CD4-positive, alpha-beta memory T cell (primary cell): ENCODE measurements at regions of chr12 and their contacts with region 1.

Region 1: DNA sequence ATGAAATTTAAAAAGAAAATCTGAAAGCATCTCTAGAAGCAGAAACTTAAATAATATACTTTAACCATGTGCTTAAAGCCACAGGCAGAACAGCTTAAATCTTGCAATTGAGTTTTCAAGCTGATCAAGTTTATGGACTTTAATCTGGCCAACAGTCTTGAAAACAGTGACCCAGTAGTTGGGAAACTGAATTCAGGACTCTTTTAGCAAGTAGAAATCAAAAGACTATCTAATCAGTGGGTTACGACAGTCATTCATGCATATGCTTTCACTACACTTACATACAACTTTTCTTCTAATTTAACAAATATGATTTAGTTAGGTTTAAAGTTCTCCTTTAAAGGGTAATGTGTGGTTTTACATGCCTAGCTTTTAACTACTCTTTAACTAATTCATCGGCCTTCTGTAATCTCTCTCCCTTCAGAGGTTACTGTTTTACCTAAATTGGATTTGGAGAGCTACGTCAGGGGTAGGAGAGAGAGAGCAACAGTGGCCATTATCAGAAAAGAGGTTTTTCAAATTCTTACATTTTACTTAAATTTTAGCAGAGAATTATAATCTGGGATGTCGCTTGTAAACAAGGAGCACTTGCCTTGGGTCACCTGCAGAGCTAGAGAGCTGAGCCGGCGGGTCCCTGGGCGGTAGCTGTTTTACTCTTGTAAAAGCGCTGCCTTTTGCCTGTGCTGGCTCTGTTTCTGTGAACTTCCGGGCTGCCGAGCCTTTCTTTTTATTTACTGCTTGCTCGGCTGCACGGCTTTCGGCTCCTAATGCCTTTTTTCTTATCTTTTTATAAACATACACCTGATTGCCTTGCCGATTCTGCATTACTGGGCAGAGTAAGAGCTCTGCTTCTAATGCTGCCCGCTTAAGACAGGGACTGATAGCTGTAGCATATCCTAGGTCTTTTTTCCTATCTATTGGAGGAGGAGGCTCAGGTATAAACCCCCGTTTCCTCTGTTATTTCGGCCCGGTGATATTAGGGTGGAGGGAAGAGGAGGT is 17.4 kb upstream of the LYZ start:
- DNase-seq: peak; percentile 72 to 79 (median 74)
- H3K4me3 ChIP-seq: peak overlapping the region; percentile 49 to 95
- H3K4me3 Mint-ChIP-seq: peak overlapping the region; percentile 94 to 99 (median 96)
- H3K27ac ChIP-seq: peak overlapping the region; percentile 72
- H3K27ac Mint-ChIP-seq: peak overlapping the region; percentile 81 to 99 (median 96)
- H3K4me1 ChIP-seq: peaks cover 60% of the 10 kb centered on the region
- H3K4me1 Mint-ChIP-seq: peaks cover 36 to 64% (median 52%) of the 10 kb centered on the region in 4 donors
- H3K27me3 ChIP-seq: no peaks in the 10 kb centered on the region
- H3K27me3 Mint-ChIP-seq: no peaks in the 10 kb centered on the region

Region 2: DNA sequence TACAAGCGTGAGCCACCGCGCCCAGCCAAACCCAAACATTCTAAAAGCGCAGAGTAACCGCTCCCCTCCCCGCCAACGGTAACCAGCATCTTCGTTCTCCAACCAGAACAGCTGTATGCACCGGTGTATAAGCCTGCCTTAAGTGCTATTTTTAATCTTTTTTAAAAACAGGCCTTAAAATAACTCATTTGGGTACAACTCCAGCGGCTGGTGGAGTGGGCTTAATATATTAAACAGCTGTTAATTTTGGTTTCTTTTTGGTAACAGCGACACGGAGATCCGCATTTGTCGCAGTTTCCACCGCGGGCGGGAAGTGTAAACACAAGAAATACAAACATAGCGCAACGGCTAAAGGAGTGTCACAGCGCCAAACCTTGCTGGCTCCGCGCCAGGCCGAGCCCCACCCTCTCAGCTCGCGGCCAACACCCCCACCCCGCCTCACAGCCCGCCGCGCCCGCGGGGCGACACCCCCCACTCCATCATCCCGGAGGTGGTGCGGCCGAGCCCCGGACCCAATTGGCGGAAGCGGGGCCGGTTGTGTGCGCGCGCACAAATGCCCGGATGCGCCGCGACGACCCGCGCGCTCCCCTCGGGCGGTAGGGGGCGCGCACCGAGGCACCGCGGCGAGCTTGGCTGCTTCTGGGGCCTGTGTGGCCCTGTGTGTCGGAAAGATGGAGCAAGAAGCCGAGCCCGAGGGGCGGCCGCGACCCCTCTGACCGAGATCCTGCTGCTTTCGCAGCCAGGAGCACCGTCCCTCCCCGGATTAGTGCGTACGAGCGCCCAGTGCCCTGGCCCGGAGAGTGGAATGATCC is 523.0 kb before region 1 on chr12 and contains the start of gene MDM2:
- CTCF ChIA-PET with region 1: no interaction called
- POLR2A ChIA-PET with region 1: interaction called, 11 read pairs
- intact Hi-C with region 1: no loop called
- DNase-seq: peak; percentile 97 to 99 (median 99)
- H3K4me3 ChIP-seq: peak within 1 kb of the TSS; percentile 42 to 94
- H3K4me3 Mint-ChIP-seq: peak within 1 kb of the TSS; percentile 95 to 97 (median 96)
- H3K27ac ChIP-seq: peak within 1 kb of the TSS; percentile 92
- H3K27ac Mint-ChIP-seq: peak within 1 kb of the TSS; percentile 98 to 99 (median 99)
- H3K4me1 ChIP-seq: peaks cover 28% of the 10 kb centered on the region
- H3K4me1 Mint-ChIP-seq: peaks cover 9 to 33% (median 22%) of the 10 kb centered on the region in 4 donors
- H3K27me3 ChIP-seq: no peaks in the 10 kb centered on the region
- H3K27me3 Mint-ChIP-seq: no peaks in the 10 kb centered on the region
- total RNA-seq, gene MDM2: 117 to 121 TPM

Region 3: DNA sequence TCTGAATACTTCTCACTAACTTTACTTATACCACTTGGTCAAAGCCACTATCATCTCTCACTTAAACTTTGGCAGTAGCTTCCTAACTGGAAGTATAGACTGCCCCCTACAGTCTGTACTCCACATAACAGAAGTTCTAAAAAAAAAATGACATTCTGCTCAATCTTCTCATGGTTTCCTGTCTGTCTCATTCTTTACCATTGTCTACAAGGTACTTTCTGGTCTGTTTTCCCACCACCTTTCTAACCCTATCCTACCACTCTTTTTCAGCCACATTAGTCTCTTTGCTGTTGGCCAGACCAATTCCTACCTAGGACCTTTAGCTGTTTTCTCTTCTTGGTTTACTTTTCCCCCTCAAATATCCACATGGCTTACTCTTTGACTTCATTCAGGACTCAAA is 76.7 kb before region 1 on chr12:
- CTCF ChIA-PET with region 1: interaction called, 3 read pairs
- POLR2A ChIA-PET with region 1: interaction called, 10 read pairs
- intact Hi-C with region 1: no loop called
- DNase-seq: peak in 4 of 5 donors; percentile 65 to 68 (median 67)
- H3K4me3 ChIP-seq: no peak overlapping the region
- H3K4me3 Mint-ChIP-seq: no peak overlapping the region
- H3K27ac ChIP-seq: peak overlapping the region; percentile 36
- H3K27ac Mint-ChIP-seq: peak overlapping the region; percentile 57 to 92 (median 86)
- H3K4me1 ChIP-seq: peaks cover 23% of the 10 kb centered on the region
- H3K4me1 Mint-ChIP-seq: peaks cover 22 to 43% (median 34%) of the 10 kb centered on the region in 4 donors
- H3K27me3 ChIP-seq: no peaks in the 10 kb centered on the region
- H3K27me3 Mint-ChIP-seq: no peaks in the 10 kb centered on the region

Region 4: DNA sequence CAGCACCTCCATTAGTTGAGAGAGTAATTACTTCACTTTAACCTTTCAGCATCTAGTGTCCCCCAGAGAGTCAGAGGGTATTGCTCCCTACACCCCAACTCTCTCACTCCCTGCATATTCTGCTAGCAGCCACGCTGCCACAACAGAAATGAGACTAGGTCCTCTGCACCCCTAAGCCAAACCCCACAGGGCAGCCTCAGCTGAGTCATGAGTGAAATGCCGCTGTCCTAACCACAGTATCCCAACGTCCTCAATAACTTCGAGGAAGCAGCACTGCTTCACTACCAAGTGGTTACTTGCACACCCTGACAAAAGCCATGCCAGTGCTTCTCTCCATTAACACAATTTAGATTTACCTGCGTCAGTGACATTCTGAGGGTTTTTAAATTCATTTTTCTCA is 10.6 kb after region 1 on chr12:
- CTCF ChIA-PET with region 1: interaction called, 5 read pairs
- POLR2A ChIA-PET with region 1: interaction called, 15 read pairs
- intact Hi-C with region 1: no loop called
- DNase-seq: no peak
- H3K4me3 ChIP-seq: no peak overlapping the region
- H3K4me3 Mint-ChIP-seq: no peak overlapping the region
- H3K27ac ChIP-seq: no peak overlapping the region
- H3K27ac Mint-ChIP-seq: no peak overlapping the region
- H3K4me1 ChIP-seq: no peaks in the 10 kb centered on the region
- H3K4me1 Mint-ChIP-seq: peaks cover 0 to 2% (median 0%) of the 10 kb centered on the region in 4 donors
- H3K27me3 ChIP-seq: no peaks in the 10 kb centered on the region
- H3K27me3 Mint-ChIP-seq: peaks cover 4 to 5% of the 10 kb centered on the region in 2 donors

Region 5: DNA sequence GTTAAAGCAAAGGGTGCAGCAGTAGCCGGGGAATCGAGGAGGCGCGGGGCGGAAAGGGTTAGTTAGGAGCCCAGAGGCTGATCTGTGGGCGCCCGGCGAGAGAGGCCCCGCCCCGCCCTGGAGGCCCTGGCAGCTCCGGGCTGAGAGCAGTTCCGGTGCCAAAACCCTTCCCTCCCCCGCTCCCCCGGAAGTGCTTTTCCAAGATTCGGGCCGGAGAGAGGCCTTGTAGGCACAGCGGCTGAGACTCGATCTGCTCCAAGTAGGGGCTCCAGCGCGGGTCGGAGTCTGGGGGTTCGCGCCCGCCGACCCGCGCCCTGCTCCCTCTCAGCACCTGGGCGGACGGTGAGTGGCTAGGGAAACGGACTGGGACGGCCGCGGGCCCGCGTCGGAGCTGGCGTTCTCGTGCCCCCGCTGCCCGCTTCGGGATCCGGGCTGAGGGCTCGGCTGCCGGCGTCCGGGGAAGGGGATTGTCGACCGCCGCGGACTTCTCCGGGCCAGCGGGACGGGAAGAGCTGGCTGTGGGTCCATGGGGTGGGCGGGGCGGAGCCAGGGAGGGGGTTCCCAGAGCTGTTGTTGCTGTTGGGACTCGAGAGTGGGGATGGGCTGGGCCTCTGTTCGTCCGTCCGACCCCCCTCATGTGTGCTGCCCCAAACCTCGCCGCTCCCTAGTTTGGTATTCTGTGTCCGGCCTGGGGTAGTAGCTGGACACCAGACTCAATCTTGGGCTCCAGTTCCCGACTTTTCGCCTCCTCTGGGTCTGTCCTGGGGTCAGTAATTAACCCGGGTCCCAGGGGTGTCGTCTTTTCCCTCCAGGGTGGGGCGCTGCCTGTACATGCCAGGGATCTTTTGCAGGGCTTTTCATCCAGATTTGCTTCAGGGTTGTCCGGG is 139.7 kb after region 1 on chr12 and contains the start of gene FRS2:
- CTCF ChIA-PET with region 1: interaction called, 3 read pairs
- POLR2A ChIA-PET with region 1: interaction called, 27 read pairs
- intact Hi-C with region 1: loop called (anchors 10 kb)
- DNase-seq: peak; percentile 78 to 87 (median 80)
- H3K4me3 ChIP-seq: peak within 1 kb of the TSS; percentile 71
- H3K4me3 Mint-ChIP-seq: peak within 1 kb of the TSS; percentile 96 to 99 (median 98)
- H3K27ac ChIP-seq: peak within 1 kb of the TSS; percentile 89
- H3K27ac Mint-ChIP-seq: peak within 1 kb of the TSS; percentile 81 to 99 (median 98)
- H3K4me1 ChIP-seq: peaks cover 42% of the 10 kb centered on the region
- H3K4me1 Mint-ChIP-seq: peaks cover 31 to 55% (median 45%) of the 10 kb centered on the region in 4 donors
- H3K27me3 ChIP-seq: no peaks in the 10 kb centered on the region
- H3K27me3 Mint-ChIP-seq: no peaks in the 10 kb centered on the region
- total RNA-seq, gene FRS2: 21.2 to 22.2 TPM

Region 6: GRCh38 chr12:69585189-69586062 is 254.7 kb after region 1 on chr12 and contains the start of gene CCT2:
- CTCF ChIA-PET with region 1: no interaction called
- POLR2A ChIA-PET with region 1: interaction called, 26 read pairs
- intact Hi-C with region 1: loop called (anchors 1 kb)
- DNase-seq: peak; percentile 91 to 96 (median 96)
- H3K4me3 ChIP-seq: peak within 1 kb of the TSS; percentile 90 to 93
- H3K4me3 Mint-ChIP-seq: peak within 1 kb of the TSS; percentile 94 to 97 (median 95)
- H3K27ac ChIP-seq: peak within 1 kb of the TSS; percentile 95
- H3K27ac Mint-ChIP-seq: peak within 1 kb of the TSS; percentile 96 to 99 (median 98)
- H3K4me1 ChIP-seq: peaks cover 16% of the 10 kb centered on the region
- H3K4me1 Mint-ChIP-seq: peaks cover 5 to 19% (median 10%) of the 10 kb centered on the region in 4 donors
- H3K27me3 ChIP-seq: no peaks in the 10 kb centered on the region
- H3K27me3 Mint-ChIP-seq: no peaks in the 10 kb centered on the region
- total RNA-seq, gene CCT2: 92.6 to 104 TPM